Breast epithelium (tissue), 4 donors: ENCODE measurements at regions of chr6 and their contacts with region 1.

Region 1: DNA sequence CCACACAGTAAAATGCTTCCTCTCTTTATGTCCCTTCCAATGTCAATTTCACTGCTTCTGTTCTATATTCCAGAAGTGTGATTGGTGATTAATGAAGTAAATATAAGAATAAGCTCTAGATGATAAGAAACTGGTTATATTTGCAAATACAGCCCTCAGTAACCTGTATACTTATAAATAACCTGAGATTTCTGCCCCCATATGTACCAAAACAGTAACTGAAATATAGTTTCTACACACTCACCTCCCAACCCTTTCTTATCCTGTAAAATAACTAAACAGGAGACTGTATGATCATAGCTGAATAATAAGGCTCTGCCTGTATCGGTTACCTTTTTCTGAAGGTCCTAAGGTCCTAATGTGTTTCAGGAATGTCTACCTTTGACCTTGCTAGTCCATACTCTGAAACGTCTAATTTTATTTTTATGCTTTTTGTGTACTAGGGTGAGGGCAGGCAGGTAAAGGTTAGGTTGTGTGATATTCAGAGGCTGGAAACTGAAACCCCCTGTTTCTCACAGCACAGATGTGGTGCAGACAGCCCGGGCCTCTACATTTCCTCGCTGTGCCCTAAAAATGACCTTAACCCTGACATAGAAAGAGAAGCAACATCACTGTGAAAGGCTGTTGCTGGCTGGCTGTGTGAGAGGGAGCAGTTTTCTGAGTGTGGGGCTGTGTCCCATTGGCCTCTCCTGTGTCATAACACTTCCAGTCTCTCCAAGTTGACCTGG is 378.8 kb downstream of the CENPW start:
- DNase-seq: no peak
- H3K4me3 ChIP-seq: no peak overlapping the region
- H3K27ac ChIP-seq: no peak overlapping the region
- H3K4me1 ChIP-seq: no peaks in the 10 kb centered on the region
- H3K27me3 ChIP-seq: no peaks in the 10 kb centered on the region
- CTCF ChIP-seq: no peak
- POLR2A ChIP-seq: no peak

Region 2: GRCh38 chr6:126947070-126947469 is 228.3 kb after region 1 on chr6:
- intact Hi-C with region 1: loop called (anchors 5 kb)
- DNase-seq: no peak
- H3K4me3 ChIP-seq: no peak overlapping the region
- H3K27ac ChIP-seq: peak overlapping the region; percentile 19 to 50
- H3K4me1 ChIP-seq: no peaks in the 10 kb centered on the region
- H3K27me3 ChIP-seq: no peaks in the 10 kb centered on the region
- CTCF ChIP-seq: no peak
- POLR2A ChIP-seq: no peak